Breast epithelium (tissue), 4 donors: ENCODE measurements at regions of chr12 and their contacts with region 1.

Region 1: GRCh38 chr12:33116284-33116683 is 219.7 kb upstream of the PKP2 start:
- DNase-seq: no peak
- H3K4me3 ChIP-seq: no peak overlapping the region
- H3K27ac ChIP-seq: no peak overlapping the region
- H3K4me1 ChIP-seq: no peaks in the 10 kb centered on the region
- H3K27me3 ChIP-seq: no peaks in the 10 kb centered on the region
- CTCF ChIP-seq: no peak
- POLR2A ChIP-seq: no peak

Region 2: GRCh38 chr12:32983968-32984367 is 132.3 kb before region 1 on chr12:
- intact Hi-C with region 1: loop called (anchors 10 kb)
- DNase-seq: no peak
- H3K4me3 ChIP-seq: no peak overlapping the region
- H3K27ac ChIP-seq: no peak overlapping the region
- H3K4me1 ChIP-seq: no peaks in the 10 kb centered on the region
- H3K27me3 ChIP-seq: no peaks in the 10 kb centered on the region
- CTCF ChIP-seq: no peak
- POLR2A ChIP-seq: no peak